MCF 10A (cell line): ENCODE measurements at regions of chr13 and their contacts with region 1.

Region 1: DNA sequence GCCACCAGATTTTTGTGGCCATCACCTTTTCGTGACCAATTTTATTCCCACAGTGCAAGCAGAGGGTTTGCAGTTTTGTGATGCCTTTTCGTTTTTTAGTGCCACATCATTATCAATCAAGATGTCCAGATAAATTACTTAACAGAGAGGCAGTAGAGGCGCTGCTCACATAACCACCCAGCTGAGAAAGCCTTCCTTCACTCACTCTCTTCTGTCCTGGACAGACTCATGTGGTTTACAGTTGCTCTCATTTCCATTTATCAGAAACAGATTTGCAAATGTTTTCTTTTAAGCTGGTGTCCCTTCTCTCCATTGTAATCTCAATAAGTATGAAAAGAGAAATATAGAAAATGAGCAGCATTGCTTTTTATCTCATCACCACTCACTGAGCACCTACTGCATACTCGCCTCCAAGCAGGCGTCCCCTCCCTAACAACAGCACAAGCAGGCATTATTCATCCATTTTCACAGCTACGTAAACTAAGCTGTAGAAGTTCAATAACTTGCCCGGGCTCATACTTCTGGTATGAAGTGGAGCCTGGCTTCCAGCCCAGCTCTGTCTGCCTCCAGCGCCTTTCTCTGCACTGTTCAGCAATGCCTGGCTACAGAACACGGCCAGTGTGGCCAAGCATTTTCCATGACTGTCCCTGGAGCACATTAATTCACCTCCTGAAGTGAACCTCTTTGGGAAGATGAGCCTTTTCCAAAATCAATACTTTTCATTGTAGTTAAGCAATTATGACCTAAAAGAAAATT is 34.6 kb upstream of the KATNAL1 start:
- DNase-seq: peak; percentile 76
- H3K4me3 Mint-ChIP-seq: peak overlapping the region; percentile 34
- H3K27ac Mint-ChIP-seq: peak overlapping the region; percentile 65
- H3K4me1 Mint-ChIP-seq: peaks cover 67% of the 10 kb centered on the region
- H3K27me3 Mint-ChIP-seq: no peaks in the 10 kb centered on the region
- CTCF ChIP-seq: no peak

Region 2: DNA sequence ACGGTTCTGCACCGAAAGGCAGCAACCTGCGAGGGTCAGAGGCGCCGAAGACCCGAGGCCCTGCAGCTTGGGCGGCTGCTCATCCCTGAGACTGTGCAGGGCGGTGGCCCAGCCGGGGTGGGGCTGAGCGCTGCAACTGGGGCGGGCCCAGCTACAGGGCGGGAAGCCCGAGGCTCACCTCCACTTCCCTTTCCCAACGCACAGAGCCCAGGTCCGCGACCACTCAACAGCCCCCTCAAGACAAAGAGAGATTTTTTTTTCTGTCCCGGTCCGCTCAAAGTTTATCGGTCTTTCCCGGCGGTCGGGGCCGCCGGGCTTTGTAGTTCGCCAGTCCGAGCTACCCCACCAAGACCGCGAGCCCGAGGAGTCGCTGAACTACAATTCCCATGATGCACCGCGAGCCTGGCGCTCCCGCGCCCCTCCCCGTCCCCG is 35.2 kb before region 1 on chr13:
- CTCF ChIA-PET with region 1: interaction called, 4 read pairs
- POLR2A ChIA-PET with region 1: interaction called, 42 read pairs
- intact Hi-C with region 1: no loop called
- DNase-seq: peak; percentile 88
- H3K4me3 Mint-ChIP-seq: peak overlapping the region; percentile 78
- H3K27ac Mint-ChIP-seq: no peak overlapping the region
- H3K4me1 Mint-ChIP-seq: peaks cover 43% of the 10 kb centered on the region
- H3K27me3 Mint-ChIP-seq: no peaks in the 10 kb centered on the region
- CTCF ChIP-seq: no peak

Region 3: DNA sequence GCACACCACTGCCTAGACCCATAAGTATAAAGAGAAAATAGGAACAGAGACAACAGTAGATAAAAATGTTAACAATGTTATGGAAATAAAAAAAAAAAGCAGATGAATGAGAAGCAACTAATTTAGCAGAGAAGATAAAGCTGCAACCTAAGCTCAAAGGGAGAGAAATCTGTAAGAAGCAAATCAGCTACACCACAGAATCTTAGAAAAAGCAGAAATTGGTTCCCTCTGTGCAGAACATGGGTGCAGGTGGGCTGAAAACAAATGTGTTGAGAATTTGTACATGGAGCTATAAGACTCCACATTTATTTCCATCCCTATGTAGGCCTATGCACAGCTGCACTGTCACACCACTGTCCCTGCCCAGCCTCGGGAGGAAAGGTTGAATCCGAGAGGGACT is 10.1 kb after region 1 on chr13:
- CTCF ChIA-PET with region 1: no interaction called
- POLR2A ChIA-PET with region 1: interaction called, 14 read pairs
- intact Hi-C with region 1: no loop called
- DNase-seq: no peak
- H3K4me3 Mint-ChIP-seq: no peak overlapping the region
- H3K27ac Mint-ChIP-seq: no peak overlapping the region
- H3K4me1 Mint-ChIP-seq: peaks cover under 1% of the 10 kb centered on the region
- H3K27me3 Mint-ChIP-seq: no peaks in the 10 kb centered on the region
- CTCF ChIP-seq: no peak

Region 4: GRCh38 chr13:30395192-30396084 is 53.4 kb after region 1 on chr13:
- CTCF ChIA-PET with region 1: interaction called, 4 read pairs
- POLR2A ChIA-PET with region 1: interaction called, 52 read pairs
- intact Hi-C with region 1: loop called (anchors 5 kb)
- DNase-seq: peak; percentile 94
- H3K4me3 Mint-ChIP-seq: peak overlapping the region; percentile 80
- H3K27ac Mint-ChIP-seq: peak overlapping the region; percentile 93
- H3K4me1 Mint-ChIP-seq: peaks cover 10% of the 10 kb centered on the region
- H3K27me3 Mint-ChIP-seq: no peaks in the 10 kb centered on the region
- CTCF ChIP-seq: no peak

Region 5: DNA sequence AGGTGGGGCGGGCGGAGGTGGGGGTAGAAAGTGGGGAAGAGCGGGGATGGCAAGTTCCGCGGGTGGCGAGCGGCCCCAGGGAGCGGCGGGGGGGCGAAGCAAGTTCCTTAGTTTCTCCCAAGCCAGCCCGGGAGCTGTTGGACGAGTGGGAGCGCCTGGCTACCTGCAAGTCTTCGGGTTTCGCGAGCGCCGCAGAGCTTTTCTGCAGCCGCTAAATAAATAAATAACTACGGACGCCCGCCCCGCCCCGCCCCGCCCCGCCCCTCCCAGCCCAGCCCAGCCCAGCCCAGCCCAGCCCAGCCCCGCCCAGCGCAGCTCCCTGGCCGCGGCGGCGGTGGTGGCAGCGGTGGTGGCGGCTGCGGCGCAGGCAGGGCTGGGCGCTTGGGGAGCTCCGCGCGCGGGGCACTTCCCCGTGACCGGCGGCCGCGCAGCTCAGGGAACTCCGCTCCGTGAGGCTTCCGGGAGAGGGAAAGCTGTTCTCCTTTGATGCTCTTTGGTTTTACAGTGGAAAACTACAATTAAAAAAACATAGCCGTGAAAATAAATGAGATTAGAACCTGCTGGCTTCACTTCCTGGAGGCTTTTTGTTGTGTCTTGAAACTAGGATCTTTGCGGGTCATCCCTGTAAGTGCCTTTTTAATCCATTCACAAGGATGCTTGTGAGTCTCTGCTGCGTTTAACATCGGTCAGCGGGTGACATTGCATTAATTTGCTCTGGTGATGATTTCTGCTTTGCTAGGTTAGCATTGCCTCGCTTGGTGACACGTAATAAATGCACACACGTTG is 80.3 kb after region 1 on chr13 and contains the start of gene UBE2L5:
- CTCF ChIA-PET with region 1: no interaction called
- POLR2A ChIA-PET with region 1: interaction called, 30 read pairs
- intact Hi-C with region 1: no loop called
- DNase-seq: peak; percentile 76
- H3K4me3 Mint-ChIP-seq: peak within 1 kb of the TSS; percentile 73
- H3K27ac Mint-ChIP-seq: peak within 1 kb of the TSS; percentile 47
- H3K4me1 Mint-ChIP-seq: peaks cover 7% of the 10 kb centered on the region
- H3K27me3 Mint-ChIP-seq: no peaks in the 10 kb centered on the region
- CTCF ChIP-seq: no peak
- total RNA-seq, gene UBE2L5: not detected in 2 replicates

Region 6: DNA sequence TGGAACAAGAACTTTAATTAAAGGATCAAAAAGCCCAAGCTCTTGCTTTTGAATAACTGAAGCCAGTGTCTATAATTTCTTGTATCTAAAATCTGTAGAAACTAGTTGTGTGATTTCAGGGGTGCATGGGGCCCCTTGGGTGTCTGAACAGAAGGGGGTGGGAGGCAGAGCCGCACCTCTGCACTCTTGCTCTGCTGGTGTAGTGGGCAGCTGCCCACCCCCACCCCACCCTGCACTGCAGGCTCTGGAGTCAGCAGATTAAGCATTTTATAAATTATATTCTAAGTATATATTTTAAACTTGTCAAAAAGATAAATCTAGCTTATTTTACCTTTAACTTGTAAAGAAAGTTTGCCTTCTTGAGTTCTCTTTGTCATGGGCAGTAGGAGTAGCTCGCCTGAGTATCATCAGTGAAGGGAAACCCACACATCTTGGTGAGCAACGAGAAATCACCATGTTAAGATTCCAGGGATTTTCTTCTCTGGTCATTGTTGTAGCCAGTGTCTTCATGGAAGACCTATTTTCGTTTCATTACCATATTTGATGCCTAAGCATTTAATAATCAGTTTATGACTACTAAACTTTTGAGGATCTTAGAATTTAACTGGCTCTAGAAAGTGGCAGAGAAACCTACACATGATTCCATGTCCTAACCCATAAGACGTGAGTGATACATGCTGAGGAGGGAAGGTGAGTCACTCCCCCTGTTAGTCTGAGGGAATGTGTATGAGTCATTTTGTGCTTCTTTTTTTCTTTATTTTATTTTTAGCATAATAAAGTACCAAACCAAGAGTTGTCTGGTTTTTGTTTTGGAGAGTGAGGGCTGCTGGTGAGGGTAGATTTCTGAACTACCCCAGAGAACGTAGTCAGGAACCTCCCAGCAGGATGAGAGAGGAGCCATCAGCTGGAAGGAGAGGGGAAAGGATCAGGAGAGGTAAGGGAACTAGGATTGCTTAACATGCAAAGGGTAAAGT is 88.0 kb after region 1 on chr13:
- CTCF ChIA-PET with region 1: no interaction called
- POLR2A ChIA-PET with region 1: interaction called, 20 read pairs
- intact Hi-C with region 1: no loop called
- DNase-seq: peak; percentile 89
- H3K4me3 Mint-ChIP-seq: peak overlapping the region; percentile 32
- H3K27ac Mint-ChIP-seq: peak overlapping the region; percentile 57
- H3K4me1 Mint-ChIP-seq: peaks cover 13% of the 10 kb centered on the region
- H3K27me3 Mint-ChIP-seq: no peaks in the 10 kb centered on the region
- CTCF ChIP-seq: no peak

Region 7: DNA sequence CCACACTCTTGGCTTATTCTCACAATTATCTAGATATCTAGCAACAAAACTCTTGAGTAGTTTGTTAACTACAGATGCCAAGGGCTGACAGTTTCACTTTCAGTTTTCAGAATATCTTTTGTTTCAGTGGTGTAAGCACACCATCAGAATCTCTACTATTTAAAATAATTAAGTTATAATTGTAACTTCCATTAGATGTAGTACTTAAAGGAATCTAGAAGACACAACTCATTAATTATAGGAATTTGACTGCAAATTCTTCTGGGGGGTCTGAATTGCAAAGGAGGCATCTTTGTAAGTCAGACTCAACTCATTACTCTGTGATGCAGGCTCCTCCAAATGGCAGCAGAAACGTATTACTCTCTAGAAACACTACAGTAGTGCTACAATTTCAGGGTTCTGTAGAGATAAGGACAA is 230.9 kb after region 1 on chr13:
- CTCF ChIA-PET with region 1: no interaction called
- POLR2A ChIA-PET with region 1: interaction called, 3 read pairs
- intact Hi-C with region 1: loop called (anchors 5 kb)
- DNase-seq: peak; percentile 54
- H3K4me3 Mint-ChIP-seq: peak overlapping the region; percentile 68
- H3K27ac Mint-ChIP-seq: peak overlapping the region; percentile 89
- H3K4me1 Mint-ChIP-seq: peaks cover 38% of the 10 kb centered on the region
- H3K27me3 Mint-ChIP-seq: no peaks in the 10 kb centered on the region
- CTCF ChIP-seq: peak; percentile 24